PC-9 (cell line): ENCODE measurements at regions of chr5 and their contacts with region 1.

Region 1: GRCh38 chr5:145856285-145856818 is 16.5 kb downstream of the GRXCR2 start:
- DNase-seq: peak in 1 of 2 experiments; percentile 51
- H3K4me3 ChIP-seq: no peak overlapping the region
- H3K27ac ChIP-seq: no peak overlapping the region
- H3K4me1 ChIP-seq: peaks cover 24% of the 10 kb centered on the region
- H3K27me3 ChIP-seq: no peaks in the 10 kb centered on the region
- CTCF ChIP-seq: no peak

Region 2: DNA sequence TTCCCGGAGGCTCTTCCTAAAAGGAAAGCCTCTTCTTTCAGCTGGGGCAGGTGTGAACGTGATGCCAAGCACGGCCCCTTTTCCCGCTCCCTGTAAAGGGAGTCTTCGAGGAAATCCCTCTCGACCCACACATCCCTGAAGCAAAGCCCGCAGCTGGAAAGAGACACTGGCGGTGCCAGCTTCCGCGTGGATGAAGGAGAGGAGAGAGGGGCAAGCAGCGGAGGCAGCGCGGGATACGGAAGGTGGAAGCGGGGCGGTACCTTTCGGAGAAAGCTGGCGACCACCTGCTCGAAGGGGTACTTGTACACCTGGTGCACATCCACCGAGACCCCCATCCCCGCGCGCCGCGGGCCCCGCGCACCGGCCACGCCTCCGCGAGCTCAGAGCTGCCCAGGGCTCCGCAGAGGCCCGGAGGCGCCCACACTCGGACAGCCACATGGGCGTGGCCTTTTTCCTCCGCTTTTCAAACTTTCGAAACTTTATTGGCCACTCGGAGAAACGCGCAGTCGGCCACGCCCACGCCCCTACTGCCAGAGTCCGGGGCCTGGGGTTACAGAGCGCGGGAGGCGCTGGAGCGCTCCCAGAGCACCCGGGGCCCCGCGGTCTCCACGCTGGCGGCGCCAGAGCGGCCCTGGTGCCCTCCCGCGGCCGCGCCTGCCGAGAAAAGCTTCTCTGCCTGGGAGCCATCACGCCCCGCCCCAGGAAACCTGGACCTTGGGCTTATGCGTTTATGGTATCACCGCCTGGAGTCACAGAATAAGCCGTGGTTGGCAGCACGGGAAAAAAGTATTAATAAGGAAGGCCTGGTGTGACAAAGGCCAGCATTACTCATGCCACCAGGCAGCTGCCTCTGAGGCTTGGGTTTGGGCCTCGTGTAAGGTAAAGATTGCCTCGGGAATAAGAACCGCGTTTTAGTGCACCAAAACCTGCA is 21.2 kb before region 1 on chr5 and contains the start of gene PRELID2:
- CTCF ChIA-PET with region 1: interaction called, 6 read pairs
- POLR2A ChIA-PET with region 1: interaction called, 5 read pairs
- intact Hi-C with region 1: loop called (anchors 2 kb)
- DNase-seq: peak; percentile 80 to 94
- H3K4me3 ChIP-seq: peak within 1 kb of the TSS; percentile 71
- H3K27ac ChIP-seq: peak within 1 kb of the TSS; percentile 35
- H3K4me1 ChIP-seq: peaks cover 25% of the 10 kb centered on the region
- H3K27me3 ChIP-seq: no peaks in the 10 kb centered on the region
- CTCF ChIP-seq: 0 out of 2 replicates have a peak, but pooled peaks have one; percentile 2
- total RNA-seq, gene PRELID2: 24.8 and 27.7 TPM in 2 replicates

Region 3: DNA sequence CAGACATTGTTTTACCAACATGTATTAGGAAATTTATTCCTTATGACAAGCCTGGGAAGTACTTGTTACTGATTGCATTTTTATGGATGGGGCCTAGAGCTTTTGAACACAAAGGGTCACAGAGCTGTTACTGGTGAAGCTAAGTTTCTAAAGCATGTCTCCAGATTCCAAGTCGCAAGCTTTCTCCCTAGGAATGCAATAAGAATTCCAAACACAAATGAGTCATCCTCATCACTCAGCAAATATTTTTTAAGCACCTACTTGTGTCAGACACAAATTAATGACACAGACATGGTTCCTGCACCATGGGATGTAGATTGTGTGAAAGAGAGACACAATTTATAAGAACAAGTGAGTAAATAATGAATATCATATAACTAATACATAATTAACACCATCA is 69.0 kb after region 1 on chr5:
- CTCF ChIA-PET with region 1: no interaction called
- POLR2A ChIA-PET with region 1: no interaction called
- intact Hi-C with region 1: loop called (anchors 2 kb)
- DNase-seq: peak; percentile 31 to 95
- H3K4me3 ChIP-seq: no peak overlapping the region
- H3K27ac ChIP-seq: peak overlapping the region; percentile 73
- H3K4me1 ChIP-seq: peaks cover 28% of the 10 kb centered on the region
- H3K27me3 ChIP-seq: no peaks in the 10 kb centered on the region
- CTCF ChIP-seq: no peak

Region 4: GRCh38 chr5:145981589-145982491 is 125.5 kb after region 1 on chr5:
- CTCF ChIA-PET with region 1: no interaction called
- POLR2A ChIA-PET with region 1: no interaction called
- intact Hi-C with region 1: loop called (anchors 5 kb)
- DNase-seq: peak; percentile 70 to 89
- H3K4me3 ChIP-seq: no peak overlapping the region
- H3K27ac ChIP-seq: peak overlapping the region; percentile 57
- H3K4me1 ChIP-seq: peaks cover 48% of the 10 kb centered on the region
- H3K27me3 ChIP-seq: no peaks in the 10 kb centered on the region
- CTCF ChIP-seq: no peak

Region 5: DNA sequence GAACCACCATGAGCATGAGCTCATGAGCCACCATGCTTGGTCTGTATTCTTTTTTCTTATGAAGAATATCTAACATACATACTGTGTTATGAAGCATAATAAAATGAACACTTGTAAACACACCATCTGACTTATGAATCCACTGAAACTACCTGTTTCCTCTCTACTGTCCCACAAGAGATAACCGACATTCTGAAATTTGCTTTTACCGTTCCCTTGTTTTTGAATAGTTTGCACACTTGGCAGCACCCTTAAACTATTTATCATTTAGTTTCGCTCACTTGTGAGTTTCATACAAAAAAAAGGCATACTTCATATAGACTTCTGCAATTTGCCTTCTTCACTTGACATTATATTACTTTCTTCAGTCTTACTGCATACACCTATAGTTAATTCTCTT is 317.2 kb after region 1 on chr5:
- CTCF ChIA-PET with region 1: no interaction called
- POLR2A ChIA-PET with region 1: no interaction called
- intact Hi-C with region 1: no loop called
- DNase-seq: no peak
- H3K4me3 ChIP-seq: no peak overlapping the region
- H3K27ac ChIP-seq: no peak overlapping the region
- H3K4me1 ChIP-seq: no peaks in the 10 kb centered on the region
- H3K27me3 ChIP-seq: no peaks in the 10 kb centered on the region
- CTCF ChIP-seq: no peak

Region 6: GRCh38 chr5:146541958-146542849 is 685.9 kb after region 1 on chr5:
- CTCF ChIA-PET with region 1: no interaction called
- POLR2A ChIA-PET with region 1: no interaction called
- intact Hi-C with region 1: no loop called
- DNase-seq: peak; percentile 42 to 75
- H3K4me3 ChIP-seq: no peak overlapping the region
- H3K27ac ChIP-seq: no peak overlapping the region
- H3K4me1 ChIP-seq: no peaks in the 10 kb centered on the region
- H3K27me3 ChIP-seq: peaks cover 4% of the 10 kb centered on the region; the same call in 1 of the 2 replicates
- CTCF ChIP-seq: peak; percentile 94